ENCODE measurements at regions of chr9 and their contacts with region 1.

Region 1: DNA sequence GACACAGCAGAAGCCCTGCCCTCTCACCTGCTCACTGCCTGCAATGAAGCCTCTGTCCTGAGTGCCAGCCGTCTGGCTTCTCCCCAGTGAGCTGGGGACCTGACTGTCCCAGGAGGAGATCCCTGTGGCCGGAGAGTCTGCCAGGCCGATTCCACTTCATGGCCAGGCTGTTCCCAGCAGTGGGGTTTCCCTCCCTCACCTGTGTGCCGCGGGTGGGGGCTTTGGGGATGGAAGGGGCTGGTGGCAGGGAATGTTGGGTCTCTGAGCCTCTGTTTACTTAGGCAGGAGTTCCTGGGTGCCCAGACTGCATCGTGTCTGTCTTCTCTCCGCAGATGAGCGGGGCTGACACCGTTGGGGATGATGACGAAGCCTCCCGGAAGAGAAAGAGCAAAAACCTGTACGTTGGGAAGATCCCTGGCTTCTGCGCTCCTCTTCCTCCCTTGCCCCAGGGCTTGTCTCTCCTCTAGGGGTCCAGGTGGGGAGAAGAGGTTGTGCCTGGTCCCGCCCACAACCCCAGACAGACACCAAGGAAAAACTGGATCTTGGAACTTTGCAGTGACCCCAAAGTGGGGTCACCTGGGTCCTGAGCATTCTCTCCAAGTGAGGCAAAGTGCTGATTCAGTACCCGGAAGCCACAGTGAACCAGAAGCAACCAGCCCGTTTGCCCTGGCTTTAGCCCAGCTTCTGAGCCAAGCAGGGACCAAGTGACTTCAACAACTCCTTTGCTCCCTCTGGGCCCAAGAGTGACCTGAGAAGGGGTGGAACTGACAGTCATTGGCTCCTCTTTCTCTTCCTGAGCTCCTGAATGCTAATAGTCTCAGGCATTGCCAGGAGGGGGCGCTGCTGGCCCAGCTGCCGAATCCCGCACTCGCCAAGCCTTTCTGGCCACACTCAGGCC is 127.7 kb downstream of the RGS3 start:
- DNase-seq: peak; percentile 73 to 96 (median 87)
- H3K4me3 ChIP-seq: no peak overlapping the region
- H3K27ac ChIP-seq: peak overlapping the region in 1 of 5 donors; percentile 47
- H3K4me1 ChIP-seq: peaks cover 16 to 45% of the 10 kb centered on the region in 2 donors
- H3K27me3 ChIP-seq: no peaks in the 10 kb centered on the region
- CTCF ChIP-seq: peak; percentile 90 to 97 (median 96)
- POLR2A ChIP-seq: no peak

Region 2: DNA sequence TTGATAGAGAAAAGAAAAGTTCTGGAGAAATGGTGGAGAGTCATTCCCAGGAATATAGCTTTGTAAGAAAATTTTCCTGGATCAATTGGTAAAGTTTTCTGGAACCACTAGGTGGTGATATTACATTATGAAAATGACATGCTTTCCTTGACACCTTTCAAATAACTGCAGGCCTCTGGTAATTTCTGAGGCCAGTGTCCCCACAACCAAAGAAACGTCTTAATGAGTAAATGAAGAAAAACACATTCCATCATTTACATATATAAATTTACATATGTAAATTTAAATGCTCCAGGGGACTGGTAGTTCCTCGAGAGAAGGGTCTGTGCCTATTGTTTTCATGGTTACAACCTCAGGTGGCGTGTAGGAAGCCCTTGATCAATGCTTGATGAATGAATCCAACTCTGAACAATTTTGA is 144.9 kb before region 1 on chr9:
- intact Hi-C with region 1: loop called (anchors 2 kb)
- DNase-seq: peak in 2 of 7 donors; percentile 10 to 19
- H3K4me3 ChIP-seq: no peak overlapping the region
- H3K27ac ChIP-seq: no peak overlapping the region
- H3K4me1 ChIP-seq: no peaks in the 10 kb centered on the region
- H3K27me3 ChIP-seq: no peaks in the 10 kb centered on the region
- CTCF ChIP-seq: peak; percentile 41 to 85 (median 72)
- POLR2A ChIP-seq: no peak

Region 3: DNA sequence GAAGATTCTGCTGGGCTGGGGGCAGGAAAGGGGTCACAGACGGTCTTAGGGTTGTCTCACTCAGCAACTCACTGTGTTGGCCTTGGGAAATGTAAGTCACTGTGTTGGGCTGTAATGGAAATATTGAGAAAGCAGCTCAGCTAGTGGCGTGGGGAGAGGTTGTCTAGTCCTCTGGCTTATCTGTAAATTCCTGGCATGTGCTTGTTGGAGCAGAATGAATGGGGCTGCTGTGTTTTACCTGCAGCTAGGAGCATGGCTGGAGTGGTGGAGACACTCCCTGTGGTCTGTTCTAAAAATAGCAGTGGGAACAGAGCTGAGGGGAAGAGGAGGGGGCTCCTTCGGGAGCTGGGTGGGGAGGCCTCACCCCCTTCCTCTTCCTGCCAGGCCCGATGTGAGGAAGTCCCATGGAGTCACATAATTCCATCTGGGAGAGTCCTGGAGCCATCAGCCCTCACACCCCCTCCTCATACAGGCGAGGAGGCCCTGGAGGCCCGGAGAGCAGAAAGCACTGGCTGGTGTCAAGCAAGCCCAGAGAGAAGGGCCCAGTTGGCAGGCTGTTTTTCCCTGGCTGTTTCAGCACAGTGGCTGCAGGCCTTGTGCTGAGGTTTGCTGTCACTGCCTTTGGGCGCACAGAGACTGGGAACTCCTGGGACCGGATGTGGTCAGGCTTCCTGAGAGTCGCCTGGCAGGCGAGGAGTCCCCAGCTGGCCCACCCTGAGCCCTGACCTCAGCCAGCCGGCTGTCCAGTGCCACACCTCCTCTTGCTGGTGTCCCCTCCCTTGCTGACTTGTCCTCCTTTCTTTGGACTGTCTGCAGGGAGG is 42.8 kb before region 1 on chr9:
- intact Hi-C with region 1: no loop called
- DNase-seq: peak; percentile 69 to 91 (median 88)
- H3K4me3 ChIP-seq: no peak overlapping the region
- H3K27ac ChIP-seq: peak overlapping the region; percentile 68 to 95 (median 86)
- H3K4me1 ChIP-seq: peaks cover 21 to 54% of the 10 kb centered on the region in 2 donors
- H3K27me3 ChIP-seq: no peaks in the 10 kb centered on the region
- CTCF ChIP-seq: no peak
- POLR2A ChIP-seq: no peak

Region 4: GRCh38 chr9:113657703-113658544 is 66.7 kb after region 1 on chr9:
- intact Hi-C with region 1: loop called (anchors 2 kb)
- DNase-seq: peak; percentile 85 to 96 (median 92)
- H3K4me3 ChIP-seq: no peak overlapping the region
- H3K27ac ChIP-seq: no peak overlapping the region
- H3K4me1 ChIP-seq: peaks cover 3 to 16% of the 10 kb centered on the region in 2 donors
- H3K27me3 ChIP-seq: no peaks in the 10 kb centered on the region
- CTCF ChIP-seq: peak; percentile 95 to 99 (median 98)
- POLR2A ChIP-seq: no peak

Region 5: GRCh38 chr9:113756476-113757192 is 165.4 kb after region 1 on chr9:
- intact Hi-C with region 1: no loop called
- DNase-seq: no peak
- H3K4me3 ChIP-seq: no peak overlapping the region
- H3K27ac ChIP-seq: no peak overlapping the region
- H3K4me1 ChIP-seq: no peaks in the 10 kb centered on the region
- H3K27me3 ChIP-seq: peaks cover 6% of the 10 kb centered on the region
- CTCF ChIP-seq: no peak
- POLR2A ChIP-seq: no peak